Activated CD8-positive, alpha-beta T cell treated with anti-CD3 and anti-CD28 coated beads for 36 hours (primary cell): ENCODE measurements at regions of chr6 and their contacts with region 1.

Region 1: GRCh38 chr6:24864343-24864742 is 65.6 kb upstream of the ARMH2 start:
- DNase-seq: no peak
- ATAC-seq: no peak
- H3K4me3 Mint-ChIP-seq: no peak overlapping the region
- H3K27ac Mint-ChIP-seq: peak overlapping the region; percentile 86
- H3K4me1 Mint-ChIP-seq: peaks cover 84% of the 10 kb centered on the region
- H3K27me3 Mint-ChIP-seq: no peaks in the 10 kb centered on the region
- CTCF ChIP-seq: no peak

Region 2: DNA sequence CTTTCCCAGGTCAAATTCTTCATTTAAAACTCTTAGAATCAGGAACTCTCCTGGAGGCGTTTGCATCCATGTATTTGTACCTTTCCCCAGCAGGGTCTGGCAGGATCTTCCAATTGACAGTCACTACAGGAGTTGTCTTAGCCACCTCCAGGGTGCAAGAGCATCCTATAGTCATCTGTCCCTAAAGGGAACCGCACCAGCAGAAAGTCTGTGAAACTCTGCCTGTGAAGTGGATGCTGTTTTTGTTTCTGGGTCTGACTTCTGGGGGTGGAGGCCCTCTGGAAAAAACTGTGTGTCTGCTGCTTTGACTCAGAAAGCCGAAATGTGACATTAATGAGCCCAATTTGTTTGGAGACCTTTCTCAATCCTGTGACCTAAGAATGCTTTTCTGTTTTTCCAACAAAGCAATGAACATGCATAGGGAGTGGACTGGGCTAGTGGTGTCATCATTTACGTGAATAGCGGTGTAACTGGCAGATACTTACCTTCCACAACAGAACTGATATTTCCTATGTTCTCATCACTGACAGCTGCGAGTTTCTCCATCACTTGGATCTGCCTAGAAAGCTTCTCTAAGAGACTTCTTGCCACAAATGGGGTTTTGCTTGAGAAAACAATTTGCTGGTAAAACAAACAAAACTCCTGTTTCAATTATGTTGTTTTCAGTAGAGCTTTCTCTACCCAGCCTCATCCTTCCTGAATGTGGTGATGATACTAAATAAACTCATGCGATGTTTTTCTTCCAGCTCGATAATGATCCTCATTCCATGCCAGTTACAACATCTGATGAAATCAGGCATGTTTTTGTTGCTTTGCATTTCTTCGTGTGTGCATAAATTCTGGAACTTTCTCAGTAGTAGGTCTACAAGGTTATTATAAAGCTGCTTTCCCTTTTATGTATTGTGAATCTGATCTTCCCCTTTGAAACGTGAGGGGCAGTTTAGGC is 32.3 kb before region 1 on chr6:
- CTCF ChIA-PET with region 1: no interaction called
- POLR2A ChIA-PET with region 1: no interaction called
- intact Hi-C with region 1: no loop called
- DNase-seq: no peak
- ATAC-seq: no peak
- H3K4me3 Mint-ChIP-seq: no peak overlapping the region
- H3K27ac Mint-ChIP-seq: peak overlapping the region; percentile 71
- H3K4me1 Mint-ChIP-seq: peaks cover 57% of the 10 kb centered on the region
- H3K27me3 Mint-ChIP-seq: no peaks in the 10 kb centered on the region
- CTCF ChIP-seq: no peak

Region 3: GRCh38 chr6:24876499-24877465 is 12.4 kb after region 1 on chr6:
- CTCF ChIA-PET with region 1: interaction called, 20 read pairs
- POLR2A ChIA-PET with region 1: interaction called, 5 read pairs
- intact Hi-C with region 1: no loop called
- DNase-seq: no peak
- ATAC-seq: no peak
- H3K4me3 Mint-ChIP-seq: no peak overlapping the region
- H3K27ac Mint-ChIP-seq: peak overlapping the region; percentile 71
- H3K4me1 Mint-ChIP-seq: peaks cover 60% of the 10 kb centered on the region
- H3K27me3 Mint-ChIP-seq: no peaks in the 10 kb centered on the region
- CTCF ChIP-seq: no peak

Region 4: GRCh38 chr6:24883618-24884017 is 19.3 kb after region 1 on chr6:
- CTCF ChIA-PET with region 1: interaction called, 20 read pairs
- POLR2A ChIA-PET with region 1: interaction called, 5 read pairs
- intact Hi-C with region 1: no loop called
- DNase-seq: peak; percentile 69
- ATAC-seq: peak; percentile 79
- H3K4me3 Mint-ChIP-seq: peak overlapping the region; percentile 49
- H3K27ac Mint-ChIP-seq: peak overlapping the region; percentile 97
- H3K4me1 Mint-ChIP-seq: peaks cover 84% of the 10 kb centered on the region
- H3K27me3 Mint-ChIP-seq: no peaks in the 10 kb centered on the region
- CTCF ChIP-seq: no peak